ENCODE measurements at regions of chr13 and their contacts with region 1.

Region 1: DNA sequence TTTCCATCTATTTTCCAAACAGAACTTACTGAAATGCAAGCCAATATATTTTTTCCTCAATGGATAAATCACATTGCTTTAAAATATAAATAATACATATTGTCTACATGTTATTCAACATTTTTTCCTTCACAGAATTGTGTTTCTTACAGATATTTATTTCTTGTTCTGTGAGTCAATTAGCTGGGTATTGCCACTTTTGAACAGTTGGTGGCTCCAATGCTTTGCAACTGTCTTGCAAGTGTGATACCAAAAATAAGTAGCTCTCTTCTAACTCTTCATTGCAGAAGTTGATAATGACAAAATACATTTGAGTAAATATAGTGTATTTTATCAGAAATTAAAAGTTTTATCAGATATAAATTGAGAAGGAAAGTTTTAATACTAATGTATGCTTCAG is 17.1 kb upstream of the GPC5 start:
- H3K4me3 ChIP-seq: no peak overlapping the region
- H3K27ac ChIP-seq: no peak overlapping the region
- H3K4me1 ChIP-seq: no peaks in the 10 kb centered on the region
- CTCF ChIP-seq: no peak

Region 2: GRCh38 chr13:91408971-91409370 is 27.6 kb after region 1 on chr13:
- CTCF ChIA-PET with region 1: interaction called, 11 read pairs
- POLR2A ChIA-PET with region 1: no interaction called
- H3K4me3 ChIP-seq: no peak overlapping the region
- H3K27ac ChIP-seq: no peak overlapping the region
- H3K4me1 ChIP-seq: no peaks in the 10 kb centered on the region
- CTCF ChIP-seq: no peak

Region 3: GRCh38 chr13:91722267-91722884 is 341.0 kb after region 1 on chr13:
- CTCF ChIA-PET with region 1: interaction called, 28 read pairs
- POLR2A ChIA-PET with region 1: no interaction called
- H3K4me3 ChIP-seq: no peak overlapping the region
- H3K27ac ChIP-seq: no peak overlapping the region
- H3K4me1 ChIP-seq: no peaks in the 10 kb centered on the region
- CTCF ChIP-seq: no peak